K562 (cell line): ENCODE measurements at regions of chr11 and their contacts with region 1.

Region 1: DNA sequence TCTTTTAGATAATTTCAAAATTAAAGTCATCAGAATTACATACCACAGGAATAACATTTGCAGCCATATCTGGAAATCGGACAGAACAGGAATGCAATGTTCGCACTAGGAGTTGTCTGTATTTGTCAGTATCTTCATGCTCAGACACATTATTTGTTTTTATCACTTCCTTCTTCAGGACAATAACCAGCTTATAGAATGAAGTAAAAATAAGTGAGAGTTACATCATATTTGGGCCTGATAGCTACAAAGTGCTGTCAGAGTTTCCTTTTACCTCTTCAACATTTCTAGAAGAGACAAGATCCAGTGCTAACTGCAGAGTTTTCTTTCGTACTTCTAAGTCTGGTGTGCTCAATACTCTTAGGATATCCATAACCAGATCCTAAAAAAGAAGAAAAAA is 18.9 kb downstream of the COPB1 start:
- DNase-seq: no peak
- ATAC-seq: peak; percentile 52
- H3K4me3 ChIP-seq: no peak overlapping the region
- H3K27ac ChIP-seq: peak overlapping the region; percentile 26; the same call in 1 of the 3 replicates
- H3K4me1 ChIP-seq: no peaks in the 10 kb centered on the region
- H3K27me3 ChIP-seq: no peaks in the 10 kb centered on the region
- CTCF ChIP-seq: no peak
- EP300 ChIP-seq: no peak
- POLR2A ChIP-seq: no peak
- RAD21 ChIP-seq: no peak

Region 2: DNA sequence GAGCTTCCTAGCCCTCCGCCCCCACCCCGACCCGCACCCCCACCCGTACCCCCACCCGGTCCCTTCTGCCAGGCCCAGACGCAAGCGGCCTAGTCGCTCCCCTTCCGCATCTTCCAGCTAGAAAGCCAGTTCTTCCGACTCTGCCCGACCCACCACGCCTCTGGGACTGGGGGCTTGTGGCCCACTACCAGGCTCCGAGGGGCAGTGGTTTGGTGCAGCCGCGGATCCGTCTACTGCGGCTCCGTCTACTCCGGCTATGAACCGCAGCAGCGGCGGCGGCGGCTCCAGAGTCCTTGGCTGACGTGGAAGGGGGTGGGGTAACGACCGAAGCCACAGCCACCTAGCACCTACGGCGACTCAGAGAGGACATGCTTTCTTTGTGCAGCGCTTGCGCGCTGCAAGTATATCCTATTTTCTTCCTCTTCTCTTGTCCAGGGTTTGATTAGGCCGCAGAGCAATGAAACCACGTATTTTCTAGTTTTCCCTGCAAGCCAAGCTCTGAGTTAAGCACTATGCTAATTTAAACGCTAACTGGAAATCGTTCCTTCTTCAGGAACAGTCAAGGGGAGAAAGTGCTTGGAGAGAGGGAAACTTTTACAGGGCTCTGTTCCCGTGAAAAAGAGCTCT is 19.0 kb after region 1 on chr11 and contains the start of gene COPB1:
- CTCF ChIA-PET with region 1: no interaction called
- POLR2A ChIA-PET with region 1: interaction called, 10 read pairs
- in situ Hi-C with region 1: no loop called
- intact Hi-C with region 1: no loop called
- DNase-seq: peak; percentile 82 to 96 (median 85)
- ATAC-seq: peak; percentile 90
- H3K4me3 ChIP-seq: peak within 1 kb of the TSS; percentile 73
- H3K27ac ChIP-seq: peak within 1 kb of the TSS; percentile 76
- H3K4me1 ChIP-seq: peaks cover 0 to 9% of the 10 kb centered on the region in 2 experiments; a peak in 3 of 5 replicates
- H3K27me3 ChIP-seq: no peaks in the 10 kb centered on the region
- CTCF ChIP-seq: no peak
- EP300 ChIP-seq: no peak
- POLR2A ChIP-seq: peak; percentile 92
- RAD21 ChIP-seq: no peak
- polyA plus RNA-seq, gene COPB1: 89.6 to 111 TPM